ENCODE measurements at regions of chrX and their contacts with region 1.

Region 1: DNA sequence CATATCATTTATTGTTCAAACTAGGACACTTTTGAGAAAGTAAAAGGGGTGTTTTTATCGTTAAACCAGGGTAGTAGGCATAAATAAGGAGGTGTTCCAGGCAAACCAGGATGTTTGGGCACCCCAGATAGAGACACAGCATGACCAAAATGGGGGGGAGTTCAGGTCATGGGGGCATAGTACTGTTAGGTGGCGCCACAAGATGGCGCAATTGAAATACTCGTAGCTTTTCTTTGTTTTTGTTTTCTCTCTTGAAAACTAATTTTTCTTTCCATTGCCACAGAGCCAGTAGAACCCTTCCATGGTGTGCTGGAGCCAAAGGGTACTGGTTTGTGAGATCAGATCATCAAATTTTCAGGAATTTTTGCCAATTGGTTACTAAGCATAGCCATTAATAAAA is 283.4 kb downstream of the BCOR start:
- DNase-seq: peak; percentile 80
- H3K4me3 Mint-ChIP-seq: no peak overlapping the region
- H3K27ac Mint-ChIP-seq: no peak overlapping the region
- H3K4me1 Mint-ChIP-seq: peaks cover 30% of the 10 kb centered on the region
- H3K27me3 Mint-ChIP-seq: no peaks in the 10 kb centered on the region

Region 2: DNA sequence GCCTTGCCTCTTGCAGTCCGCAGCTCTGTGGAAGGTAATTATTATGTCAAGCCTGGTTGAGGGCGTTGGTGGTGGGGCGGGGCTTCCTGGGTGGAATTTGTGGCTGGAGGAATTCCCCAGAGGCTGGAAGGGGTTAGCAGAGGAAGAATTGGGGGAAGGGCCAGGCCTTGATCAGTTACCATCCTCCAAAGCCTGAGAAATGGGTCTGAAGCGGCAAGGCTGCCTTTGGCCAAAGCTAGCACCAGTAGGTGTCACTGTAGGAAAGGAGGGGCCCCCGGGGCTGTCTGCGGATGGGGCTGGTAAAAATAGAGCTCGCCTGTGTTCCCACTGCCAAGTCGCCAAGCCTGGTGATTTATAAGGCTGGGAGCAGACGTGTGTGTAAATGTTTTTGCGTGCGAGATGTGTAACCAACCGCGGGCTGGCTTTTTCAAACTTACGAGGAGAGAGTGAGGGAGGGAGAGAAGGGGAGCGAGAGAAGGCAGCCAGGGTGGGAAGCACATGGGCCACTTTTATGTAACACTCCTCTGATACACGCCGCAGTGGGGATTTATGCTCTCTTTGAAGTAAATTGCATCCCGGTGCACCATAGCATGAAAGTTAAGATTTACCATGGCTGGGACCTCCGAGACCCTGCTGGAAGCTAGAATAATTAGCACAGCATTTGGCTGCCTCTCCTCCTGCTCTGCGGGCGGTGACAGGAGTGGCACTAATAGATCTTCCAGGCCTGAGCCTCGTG is 83.6 kb before region 1 on chrX:
- intact Hi-C with region 1: loop called (anchors 5 kb)
- DNase-seq: peak; percentile 85
- H3K4me3 Mint-ChIP-seq: peak overlapping the region; percentile 28
- H3K27ac Mint-ChIP-seq: peak overlapping the region; percentile 74
- H3K4me1 Mint-ChIP-seq: peaks cover 19% of the 10 kb centered on the region
- H3K27me3 Mint-ChIP-seq: no peaks in the 10 kb centered on the region

Region 3: GRCh38 chrX:39755143-39756032 is 59.0 kb before region 1 on chrX:
- intact Hi-C with region 1: no loop called
- DNase-seq: no peak
- H3K4me3 Mint-ChIP-seq: no peak overlapping the region
- H3K27ac Mint-ChIP-seq: no peak overlapping the region
- H3K4me1 Mint-ChIP-seq: peaks cover 10% of the 10 kb centered on the region
- H3K27me3 Mint-ChIP-seq: no peaks in the 10 kb centered on the region

Region 4: DNA sequence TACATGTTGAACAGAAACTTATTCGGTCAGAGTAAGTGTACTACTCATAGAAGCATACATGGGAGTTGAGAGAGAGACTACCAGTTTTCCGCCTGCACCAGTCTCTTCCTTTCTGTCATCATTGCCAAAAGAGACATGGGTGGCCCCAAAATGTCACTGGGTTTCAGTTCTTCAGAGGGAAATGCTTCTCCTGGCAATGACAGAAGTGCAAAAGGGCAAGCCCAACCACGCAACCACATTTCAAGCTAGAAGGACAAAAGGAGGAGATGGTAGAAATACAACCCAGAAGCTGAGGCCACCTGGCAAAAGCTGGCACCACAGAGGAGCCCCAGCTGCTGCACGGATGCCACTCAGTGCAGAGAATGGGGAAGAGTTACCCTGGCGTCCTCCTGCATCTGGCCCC is 36.8 kb before region 1 on chrX:
- intact Hi-C with region 1: loop called (anchors 2 kb)
- DNase-seq: peak; percentile 67
- H3K4me3 Mint-ChIP-seq: peak overlapping the region; percentile 64
- H3K27ac Mint-ChIP-seq: peak overlapping the region; percentile 89
- H3K4me1 Mint-ChIP-seq: peaks cover 31% of the 10 kb centered on the region
- H3K27me3 Mint-ChIP-seq: no peaks in the 10 kb centered on the region

Region 5: DNA sequence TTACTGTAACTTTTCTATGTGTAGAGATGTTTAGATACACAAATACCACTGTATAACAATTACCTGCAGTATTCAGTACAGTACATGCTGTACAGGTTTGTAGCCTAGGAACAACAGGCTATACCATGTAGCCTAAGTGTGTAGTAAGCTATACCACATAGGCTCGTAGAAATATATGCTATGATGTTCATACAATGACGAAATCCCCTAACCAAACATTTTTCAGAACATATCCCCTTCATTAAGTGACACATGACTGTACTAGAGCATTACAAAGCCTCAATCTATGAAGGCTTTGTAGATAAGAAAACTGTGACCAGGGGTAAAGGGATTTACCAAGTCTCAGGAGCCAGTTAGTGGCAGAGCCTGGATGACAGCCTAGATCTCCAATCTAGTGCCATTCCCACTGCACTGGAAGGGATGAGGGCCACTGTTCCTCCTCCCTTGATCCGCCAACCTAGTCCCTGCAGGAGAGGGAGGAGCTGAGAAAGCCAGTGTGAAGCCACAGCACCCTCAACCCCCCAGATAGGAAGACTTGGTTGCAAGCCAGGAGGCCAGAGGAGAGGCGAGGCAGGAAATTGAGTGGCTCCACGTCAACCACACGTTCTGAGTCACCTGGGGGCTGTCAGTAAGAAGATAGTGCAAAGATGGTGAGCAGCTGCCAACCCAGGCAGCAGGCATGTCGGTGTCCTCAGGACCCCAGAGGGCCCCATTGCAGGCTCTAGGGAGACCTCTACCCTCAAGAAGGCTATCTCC is 55.6 kb after region 1 on chrX:
- intact Hi-C with region 1: no loop called
- DNase-seq: peak; percentile 89
- H3K4me3 Mint-ChIP-seq: peak overlapping the region; percentile 53
- H3K27ac Mint-ChIP-seq: peak overlapping the region; percentile 90
- H3K4me1 Mint-ChIP-seq: peaks cover 46% of the 10 kb centered on the region
- H3K27me3 Mint-ChIP-seq: peaks cover 2% of the 10 kb centered on the region

Region 6: GRCh38 chrX:39900801-39901170 is 86.4 kb after region 1 on chrX:
- intact Hi-C with region 1: loop called (anchors 5 kb)
- DNase-seq: no peak
- H3K4me3 Mint-ChIP-seq: no peak overlapping the region
- H3K27ac Mint-ChIP-seq: no peak overlapping the region
- H3K4me1 Mint-ChIP-seq: peaks cover 9% of the 10 kb centered on the region
- H3K27me3 Mint-ChIP-seq: peaks cover 2% of the 10 kb centered on the region

Region 7: GRCh38 chrX:40013266-40014195 is 199.1 kb after region 1 on chrX:
- intact Hi-C with region 1: loop called (anchors 1 kb)
- DNase-seq: peak; percentile 86
- H3K4me3 Mint-ChIP-seq: peak overlapping the region; percentile 80
- H3K27ac Mint-ChIP-seq: peak overlapping the region; percentile 88
- H3K4me1 Mint-ChIP-seq: peaks cover 18% of the 10 kb centered on the region
- H3K27me3 Mint-ChIP-seq: peaks cover 11% of the 10 kb centered on the region